ENCODE measurements at regions of chr1 and their contacts with region 1.

Region 1: DNA sequence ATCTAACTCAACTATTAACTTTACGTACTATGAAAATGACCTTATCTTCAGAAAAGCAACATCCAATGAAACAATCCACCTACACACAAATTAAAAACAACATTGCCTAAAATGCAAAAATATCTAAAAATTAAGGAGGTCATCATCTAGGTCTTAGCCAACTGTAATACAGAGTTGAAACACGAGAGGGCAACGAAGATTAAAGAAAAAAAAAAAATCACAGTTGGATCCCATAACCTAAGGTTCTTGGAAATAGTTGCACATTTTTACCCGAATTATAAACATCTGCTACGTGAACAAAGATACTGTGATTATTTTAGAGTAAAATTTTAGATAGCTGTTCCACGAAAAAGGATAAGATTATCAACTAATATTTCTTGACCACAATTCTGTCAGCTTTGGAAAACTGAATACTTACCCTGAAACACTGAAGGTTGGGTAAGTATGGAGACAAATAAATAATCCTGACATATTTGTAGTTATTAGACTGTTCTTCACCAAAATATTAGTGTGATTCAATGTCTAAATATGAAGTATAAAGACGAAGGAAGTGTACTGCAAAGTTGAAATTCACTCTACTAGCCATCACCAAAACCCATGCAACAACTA is 88.0 kb upstream of the AK4 start:
- DNase-seq: peak; percentile 61
- ATAC-seq: peak; percentile 91
- H3K4me3 ChIP-seq: no peak overlapping the region
- H3K27ac ChIP-seq: no peak overlapping the region
- H3K4me1 ChIP-seq: no peaks in the 10 kb centered on the region
- H3K27me3 ChIP-seq: no peaks in the 10 kb centered on the region
- CTCF ChIP-seq: peak; percentile 62
- POLR2A ChIP-seq: no peak
- RAD21 ChIP-seq: peak; percentile 60

Region 2: DNA sequence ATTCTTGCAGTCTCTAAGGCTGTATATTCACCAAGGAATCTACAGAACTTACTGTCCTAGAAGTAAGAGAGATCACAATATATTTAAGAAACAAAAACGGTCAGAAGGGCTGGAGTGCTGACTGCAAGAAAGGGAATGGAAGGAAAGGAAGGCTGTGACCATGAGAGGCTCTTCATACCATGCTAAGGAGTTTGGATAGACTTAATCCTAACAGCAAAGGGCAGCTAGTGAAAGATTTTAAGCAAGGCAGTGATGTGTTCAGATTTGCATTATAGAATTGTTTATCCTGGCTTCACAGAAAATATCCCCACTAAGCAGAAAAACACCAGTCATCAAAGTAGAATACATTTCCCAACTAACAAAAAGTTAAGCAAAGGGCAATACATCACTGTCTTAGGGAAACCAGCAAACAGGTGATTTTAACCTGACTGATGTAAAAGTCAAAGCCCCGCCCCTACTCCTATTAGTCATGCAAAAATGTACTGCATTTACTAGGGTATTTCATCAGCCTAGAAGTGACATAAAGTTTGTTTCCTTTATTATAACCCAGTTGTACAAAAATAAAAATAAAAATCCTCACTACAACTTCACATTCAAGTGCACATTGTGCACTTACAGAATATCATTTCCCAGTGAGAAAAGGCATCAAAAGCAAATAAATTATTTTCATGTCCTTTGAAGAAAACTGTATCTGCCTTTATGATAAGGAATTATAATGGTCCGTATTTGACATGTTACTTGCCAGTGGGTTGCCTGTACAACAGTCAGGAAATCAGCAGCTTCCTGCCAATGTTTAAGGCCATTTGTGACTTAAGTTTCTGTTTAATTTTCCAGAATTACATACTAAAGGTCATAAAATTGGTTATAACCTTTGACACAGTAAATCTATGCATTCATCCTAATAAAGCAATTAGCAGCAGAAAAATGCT is 110.9 kb before region 1 on chr1:
- CTCF ChIA-PET with region 1: no interaction called
- POLR2A ChIA-PET with region 1: no interaction called
- dilution Hi-C with region 1: no loop called
- in situ Hi-C with region 1: no loop called
- intact Hi-C with region 1: no loop called
- DNase-seq: no peak
- ATAC-seq: peak; percentile 35
- H3K4me3 ChIP-seq: no peak overlapping the region
- H3K27ac ChIP-seq: no peak overlapping the region
- H3K4me1 ChIP-seq: peaks cover 2% of the 10 kb centered on the region
- H3K27me3 ChIP-seq: no peaks in the 10 kb centered on the region
- CTCF ChIP-seq: no peak
- POLR2A ChIP-seq: no peak
- RAD21 ChIP-seq: no peak

Region 3: GRCh38 chr1:65090403-65090802 is 30.4 kb after region 1 on chr1:
- CTCF ChIA-PET with region 1: no interaction called
- POLR2A ChIA-PET with region 1: no interaction called
- dilution Hi-C with region 1: no loop called
- in situ Hi-C with region 1: no loop called
- intact Hi-C with region 1: no loop called
- DNase-seq: no peak
- ATAC-seq: no peak
- H3K4me3 ChIP-seq: no peak overlapping the region
- H3K27ac ChIP-seq: no peak overlapping the region
- H3K4me1 ChIP-seq: no peaks in the 10 kb centered on the region
- H3K27me3 ChIP-seq: peaks cover 3% of the 10 kb centered on the region
- CTCF ChIP-seq: no peak
- POLR2A ChIP-seq: no peak
- RAD21 ChIP-seq: no peak

Region 4: DNA sequence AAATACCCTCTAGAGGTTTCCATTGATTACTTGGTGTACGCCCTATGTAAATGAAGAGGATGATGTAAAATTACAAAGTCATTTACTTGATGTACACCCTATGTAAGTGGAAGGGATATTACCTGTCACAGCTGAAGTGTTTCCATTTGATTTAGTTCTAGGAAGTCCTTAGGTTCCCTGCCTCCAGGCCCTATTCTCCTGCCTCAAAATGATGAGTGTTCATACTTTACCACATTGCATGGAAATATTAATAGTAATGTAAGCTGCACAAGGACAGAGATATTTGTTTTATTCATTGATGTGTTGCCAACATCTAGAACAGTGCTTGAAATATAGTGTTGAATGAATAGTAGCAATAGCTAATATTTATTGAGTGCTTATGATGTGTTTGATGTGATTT is 78.5 kb after region 1 on chr1:
- CTCF ChIA-PET with region 1: interaction called, 10 read pairs
- POLR2A ChIA-PET with region 1: no interaction called
- dilution Hi-C with region 1: no loop called
- in situ Hi-C with region 1: no loop called
- intact Hi-C with region 1: no loop called
- DNase-seq: no peak
- ATAC-seq: no peak
- H3K4me3 ChIP-seq: no peak overlapping the region
- H3K27ac ChIP-seq: no peak overlapping the region
- H3K4me1 ChIP-seq: no peaks in the 10 kb centered on the region
- H3K27me3 ChIP-seq: peaks cover 4% of the 10 kb centered on the region; the same call in 1 of the 2 replicates
- CTCF ChIP-seq: no peak
- POLR2A ChIP-seq: no peak
- RAD21 ChIP-seq: no peak

Region 5: GRCh38 chr1:65189576-65190115 is 129.6 kb after region 1 on chr1:
- CTCF ChIA-PET with region 1: no interaction called
- POLR2A ChIA-PET with region 1: no interaction called
- dilution Hi-C with region 1: no loop called
- in situ Hi-C with region 1: no loop called
- intact Hi-C with region 1: no loop called
- DNase-seq: peak; percentile 44
- ATAC-seq: peak; percentile 62
- H3K4me3 ChIP-seq: no peak overlapping the region
- H3K27ac ChIP-seq: no peak overlapping the region
- H3K4me1 ChIP-seq: peaks cover 3% of the 10 kb centered on the region
- H3K27me3 ChIP-seq: no peaks in the 10 kb centered on the region
- CTCF ChIP-seq: no peak
- POLR2A ChIP-seq: no peak
- RAD21 ChIP-seq: no peak

Region 6: GRCh38 chr1:65209005-65209885 is 149.2 kb after region 1 on chr1:
- CTCF ChIA-PET with region 1: no interaction called
- POLR2A ChIA-PET with region 1: no interaction called
- dilution Hi-C with region 1: no loop called
- in situ Hi-C with region 1: loop called (anchors 5 kb)
- intact Hi-C with region 1: loop called (anchors 1 kb)
- DNase-seq: peak; percentile 47
- ATAC-seq: peak; percentile 81
- H3K4me3 ChIP-seq: no peak overlapping the region
- H3K27ac ChIP-seq: no peak overlapping the region
- H3K4me1 ChIP-seq: no peaks in the 10 kb centered on the region; the same call in 1 of the 2 replicates
- H3K27me3 ChIP-seq: no peaks in the 10 kb centered on the region
- CTCF ChIP-seq: peak; percentile 62
- POLR2A ChIP-seq: no peak
- RAD21 ChIP-seq: peak; percentile 47

Region 7: GRCh38 chr1:65254319-65255034 is 194.4 kb after region 1 on chr1:
- CTCF ChIA-PET with region 1: no interaction called
- POLR2A ChIA-PET with region 1: no interaction called
- dilution Hi-C with region 1: no loop called
- in situ Hi-C with region 1: no loop called
- intact Hi-C with region 1: no loop called
- DNase-seq: peak; percentile 30
- ATAC-seq: peak; percentile 99
- H3K4me3 ChIP-seq: peak overlapping the region; percentile 55
- H3K27ac ChIP-seq: no peak overlapping the region
- H3K4me1 ChIP-seq: no peaks in the 10 kb centered on the region; the same call in 1 of the 2 replicates
- H3K27me3 ChIP-seq: peaks cover 21% of the 10 kb centered on the region
- CTCF ChIP-seq: no peak
- POLR2A ChIP-seq: no peak
- RAD21 ChIP-seq: no peak

Region 8: GRCh38 chr1:65440915-65441314 is 380.9 kb after region 1 on chr1:
- CTCF ChIA-PET with region 1: interaction called, 12 read pairs
- POLR2A ChIA-PET with region 1: no interaction called
- dilution Hi-C with region 1: no loop called
- in situ Hi-C with region 1: no loop called
- intact Hi-C with region 1: no loop called
- DNase-seq: no peak
- ATAC-seq: peak; percentile 54
- H3K4me3 ChIP-seq: no peak overlapping the region
- H3K27ac ChIP-seq: no peak overlapping the region; the same call in 1 of the 2 replicates
- H3K4me1 ChIP-seq: peaks cover 8% of the 10 kb centered on the region
- H3K27me3 ChIP-seq: no peaks in the 10 kb centered on the region
- CTCF ChIP-seq: no peak
- POLR2A ChIP-seq: no peak
- RAD21 ChIP-seq: no peak